Panc1 (cell line): ENCODE measurements at regions of chr11 and their contacts with region 1.

Region 1: GRCh38 chr11:9951714-9952275 is 287.9 kb downstream of the SWAP70 start:
- DNase-seq: no peak
- ATAC-seq: no peak
- H3K4me3 ChIP-seq: no peak overlapping the region
- H3K27ac ChIP-seq: peak overlapping the region; percentile 75
- H3K4me1 ChIP-seq: peaks cover 15% of the 10 kb centered on the region
- H3K27me3 ChIP-seq: no peaks in the 10 kb centered on the region
- CTCF ChIP-seq: no peak

Region 2: DNA sequence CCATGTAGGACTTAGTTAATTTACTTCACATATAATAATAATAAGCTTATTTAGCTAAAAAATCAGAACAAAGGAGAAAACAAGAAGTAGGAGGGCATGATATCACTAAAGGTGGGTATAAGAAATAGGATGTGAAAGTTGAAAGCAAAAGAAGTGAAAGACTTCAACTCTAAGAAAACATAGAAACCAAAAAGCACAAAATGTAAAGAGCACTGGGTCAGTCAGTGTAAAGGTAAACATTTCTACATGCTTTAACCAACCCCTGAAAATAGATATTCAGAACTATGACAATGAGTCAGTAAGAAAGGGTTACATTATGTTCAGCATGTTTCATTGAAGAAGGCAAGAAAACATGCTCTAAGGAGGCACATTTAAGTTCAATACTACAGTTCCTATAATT is 10.9 kb after region 1 on chr11:
- CTCF ChIA-PET with region 1: no interaction called
- POLR2A ChIA-PET with region 1: interaction called, 11 read pairs
- in situ Hi-C with region 1: no loop called
- intact Hi-C with region 1: no loop called
- DNase-seq: no peak
- ATAC-seq: no peak
- H3K4me3 ChIP-seq: no peak overlapping the region
- H3K27ac ChIP-seq: no peak overlapping the region; the same call in 1 of the 2 replicates
- H3K4me1 ChIP-seq: no peaks in the 10 kb centered on the region
- H3K27me3 ChIP-seq: no peaks in the 10 kb centered on the region
- CTCF ChIP-seq: no peak